IMR-90 (cell line): ENCODE measurements at regions of chr12 and their contacts with region 1.

Region 1: DNA sequence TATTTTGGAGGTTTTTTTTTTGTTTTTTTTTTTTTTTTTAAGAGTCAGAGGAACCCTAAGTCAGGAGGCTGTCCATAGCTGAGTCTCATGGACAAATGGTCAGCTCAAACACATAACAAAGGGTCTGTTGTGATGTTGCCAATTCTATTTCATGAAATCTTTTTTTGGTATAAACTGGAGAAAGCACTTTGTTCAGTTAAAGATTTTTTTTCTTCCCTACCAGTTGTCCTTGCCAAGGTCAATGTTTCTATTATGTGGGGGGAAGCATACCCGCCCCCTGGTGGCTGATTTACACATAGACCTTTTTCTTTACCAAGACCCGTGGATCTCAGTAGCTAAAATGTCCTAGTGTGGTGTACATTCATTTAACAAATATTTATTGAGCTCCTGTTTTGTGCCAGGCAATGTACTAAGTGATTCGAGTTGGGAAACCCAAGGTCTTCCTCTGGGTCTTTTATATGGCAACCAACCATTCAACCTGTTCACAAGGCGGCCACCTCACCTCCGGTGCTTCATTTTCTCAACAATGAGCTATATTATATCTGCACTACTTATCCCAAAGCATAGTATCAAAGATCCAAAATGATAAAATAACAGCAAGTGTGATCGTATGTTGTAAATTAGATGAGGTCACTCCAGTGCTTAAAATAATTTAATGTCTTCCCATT is 214.5 kb downstream of the PAH start:
- DNase-seq: peak; percentile 65
- ATAC-seq: peak; percentile 78
- H3K4me3 ChIP-seq: no peak overlapping the region
- H3K27ac ChIP-seq: no peak overlapping the region
- H3K4me1 ChIP-seq: no peaks in the 10 kb centered on the region; the same call in 1 of the 2 replicates
- H3K27me3 ChIP-seq: peaks cover 1% of the 10 kb centered on the region; the same call in 1 of the 2 replicates
- CTCF ChIP-seq: peak; percentile 73
- POLR2A ChIP-seq: no peak
- RAD21 ChIP-seq: peak; percentile 76

Region 2: GRCh38 chr12:102095675-102096263 is 606.8 kb before region 1 on chr12:
- CTCF ChIA-PET with region 1: no interaction called
- POLR2A ChIA-PET with region 1: no interaction called
- dilution Hi-C with region 1: no loop called
- in situ Hi-C with region 1: no loop called
- intact Hi-C with region 1: loop called (anchors 1 kb)
- DNase-seq: peak; percentile 61
- ATAC-seq: peak; percentile 88
- H3K4me3 ChIP-seq: no peak overlapping the region
- H3K27ac ChIP-seq: no peak overlapping the region
- H3K4me1 ChIP-seq: peaks cover 3% of the 10 kb centered on the region; the same call in 1 of the 2 replicates
- H3K27me3 ChIP-seq: no peaks in the 10 kb centered on the region
- CTCF ChIP-seq: peak; percentile 57
- POLR2A ChIP-seq: no peak
- RAD21 ChIP-seq: peak; percentile 54

Region 3: DNA sequence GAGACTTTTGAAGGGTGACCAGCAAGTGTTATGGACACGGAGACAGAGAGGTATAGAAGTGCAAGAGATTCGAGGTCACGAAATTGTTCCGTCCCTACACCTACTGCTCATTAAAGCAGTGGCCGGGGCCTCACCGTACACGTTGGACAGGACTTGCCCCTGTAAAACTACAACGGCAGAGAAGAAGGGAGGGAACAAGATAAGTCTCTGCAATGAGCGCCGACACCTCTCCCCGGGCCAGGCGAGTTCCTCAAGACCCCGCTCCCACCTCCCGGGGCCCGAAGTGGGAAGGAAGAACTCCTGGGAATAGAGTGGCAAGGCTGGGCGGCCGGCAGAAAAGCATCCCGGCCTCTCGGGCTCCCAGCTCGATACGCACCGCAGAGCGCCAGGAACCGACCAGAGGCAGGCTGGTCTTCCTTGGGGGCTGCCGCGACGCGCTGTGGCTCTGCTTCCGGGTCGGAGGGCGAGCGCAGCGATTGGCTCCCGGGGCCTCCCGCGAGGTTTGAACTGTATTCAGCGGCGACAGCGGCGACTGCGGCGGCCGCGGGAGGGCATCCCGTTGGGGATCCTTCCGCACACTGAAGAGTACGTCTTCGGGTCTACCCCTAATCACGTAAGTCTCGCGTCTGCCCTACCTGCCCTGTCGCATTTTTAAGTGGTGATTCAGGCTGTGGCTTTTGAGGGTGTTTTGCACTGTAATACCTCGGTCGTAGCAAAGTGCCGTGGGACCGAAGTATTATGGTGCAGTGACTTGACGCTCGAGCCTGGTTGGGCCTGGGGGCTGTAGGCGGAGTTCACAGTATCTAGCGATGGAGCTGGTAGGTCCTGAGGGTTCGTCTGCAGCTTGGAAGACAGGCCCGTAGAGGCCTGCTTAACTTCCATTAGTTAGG is 582.7 kb before region 1 on chr12 and contains the starts of genes NUP37 and PARPBP:
- CTCF ChIA-PET with region 1: no interaction called
- POLR2A ChIA-PET with region 1: no interaction called
- dilution Hi-C with region 1: no loop called
- in situ Hi-C with region 1: no loop called
- intact Hi-C with region 1: loop called (anchors 2 kb)
- DNase-seq: peak; percentile 81
- ATAC-seq: peak; percentile 98
- H3K4me3 ChIP-seq: peak within 1 kb of the TSS; percentile 86
- H3K27ac ChIP-seq: peak within 1 kb of the TSS; percentile 75
- H3K4me1 ChIP-seq: peaks cover 4% of the 10 kb centered on the region; the same call in 1 of the 2 replicates
- H3K27me3 ChIP-seq: no peaks in the 10 kb centered on the region
- CTCF ChIP-seq: no peak
- POLR2A ChIP-seq: peak; percentile 77
- RAD21 ChIP-seq: no peak
- total RNA-seq, gene NUP37: 55.0 and 71.9 TPM in 2 replicates
- total RNA-seq, gene PARPBP: 7.2 and 15.6 TPM in 2 replicates

Region 4: GRCh38 chr12:102169922-102170621 is 532.5 kb before region 1 on chr12:
- CTCF ChIA-PET with region 1: no interaction called
- POLR2A ChIA-PET with region 1: no interaction called
- dilution Hi-C with region 1: no loop called
- in situ Hi-C with region 1: no loop called
- intact Hi-C with region 1: loop called (anchors 5 kb)
- DNase-seq: peak; percentile 63
- ATAC-seq: peak; percentile 74
- H3K4me3 ChIP-seq: no peak overlapping the region
- H3K27ac ChIP-seq: no peak overlapping the region
- H3K4me1 ChIP-seq: peaks cover 7% of the 10 kb centered on the region
- H3K27me3 ChIP-seq: no peaks in the 10 kb centered on the region
- CTCF ChIP-seq: peak; percentile 57
- POLR2A ChIP-seq: no peak
- RAD21 ChIP-seq: peak; percentile 53

Region 5: DNA sequence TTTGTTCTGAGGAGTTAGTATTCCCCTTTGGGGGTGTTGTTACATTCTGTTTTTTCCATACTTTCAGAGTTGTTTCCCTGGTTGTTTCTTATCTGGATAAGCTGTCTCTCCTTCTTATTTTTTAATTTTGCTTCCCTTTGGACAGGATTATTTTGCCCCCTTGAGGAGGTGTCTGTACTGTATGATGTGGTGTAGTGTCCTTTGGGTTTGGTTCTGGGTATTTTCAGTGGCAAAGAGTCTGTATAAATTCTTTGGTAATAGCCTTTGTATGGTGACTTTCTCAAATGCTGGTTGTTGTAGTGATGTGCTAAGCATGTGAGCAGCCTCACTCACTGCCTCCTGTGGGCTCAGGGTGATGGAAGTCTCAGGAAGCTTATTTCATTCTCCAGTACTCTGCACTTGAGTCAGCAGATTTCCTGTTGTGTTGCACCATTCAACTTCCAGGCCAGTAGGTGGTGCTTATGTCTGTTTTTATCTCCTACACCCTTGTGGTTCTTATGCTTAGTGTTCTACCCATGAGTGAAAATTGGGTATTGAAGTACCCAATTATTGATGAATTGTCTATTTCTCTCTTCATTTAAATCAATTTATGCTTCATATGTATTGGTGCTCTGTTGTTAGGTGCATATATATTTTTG is 401.6 kb before region 1 on chr12:
- CTCF ChIA-PET with region 1: interaction called, 3 read pairs
- POLR2A ChIA-PET with region 1: no interaction called
- dilution Hi-C with region 1: no loop called
- in situ Hi-C with region 1: no loop called
- intact Hi-C with region 1: loop called (anchors 2 kb)
- DNase-seq: peak; percentile 73
- ATAC-seq: peak; percentile 80
- H3K4me3 ChIP-seq: no peak overlapping the region
- H3K27ac ChIP-seq: no peak overlapping the region
- H3K4me1 ChIP-seq: no peaks in the 10 kb centered on the region
- H3K27me3 ChIP-seq: no peaks in the 10 kb centered on the region
- CTCF ChIP-seq: peak; percentile 57
- POLR2A ChIP-seq: no peak
- RAD21 ChIP-seq: peak; percentile 65

Region 6: GRCh38 chr12:102484428-102484958 is 218.1 kb before region 1 on chr12:
- CTCF ChIA-PET with region 1: interaction called, 3 read pairs
- POLR2A ChIA-PET with region 1: no interaction called
- dilution Hi-C with region 1: no loop called
- in situ Hi-C with region 1: no loop called
- intact Hi-C with region 1: loop called (anchors 1 kb)
- DNase-seq: peak; percentile 41
- ATAC-seq: peak; percentile 51
- H3K4me3 ChIP-seq: no peak overlapping the region
- H3K27ac ChIP-seq: no peak overlapping the region
- H3K4me1 ChIP-seq: peaks cover 4% of the 10 kb centered on the region; the same call in 1 of the 2 replicates
- H3K27me3 ChIP-seq: no peaks in the 10 kb centered on the region
- CTCF ChIP-seq: peak; percentile 79
- POLR2A ChIP-seq: no peak
- RAD21 ChIP-seq: peak; percentile 64

Region 7: DNA sequence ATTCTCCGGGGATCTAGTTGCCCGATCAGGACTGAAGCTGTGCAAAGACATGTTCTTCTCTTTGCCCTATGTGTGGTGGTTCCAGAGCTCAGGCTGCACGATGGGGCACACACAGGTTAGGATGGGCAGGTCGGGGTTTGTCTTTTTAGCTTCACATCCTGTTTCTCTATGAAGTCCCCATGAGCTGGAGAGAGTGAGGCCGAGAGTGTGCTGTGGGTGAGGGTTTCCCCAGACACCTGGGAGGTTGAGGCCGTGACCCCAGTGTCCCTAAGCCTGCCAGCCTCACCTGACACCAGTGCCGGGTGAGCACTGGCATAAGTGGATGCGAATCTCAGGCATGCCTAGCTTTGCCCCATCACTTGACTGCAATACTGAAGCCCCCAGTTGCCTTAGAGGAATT is 189.3 kb before region 1 on chr12:
- CTCF ChIA-PET with region 1: no interaction called
- POLR2A ChIA-PET with region 1: no interaction called
- dilution Hi-C with region 1: no loop called
- in situ Hi-C with region 1: no loop called
- intact Hi-C with region 1: loop called (anchors 1 kb)
- DNase-seq: no peak
- ATAC-seq: no peak
- H3K4me3 ChIP-seq: no peak overlapping the region
- H3K27ac ChIP-seq: no peak overlapping the region
- H3K4me1 ChIP-seq: no peaks in the 10 kb centered on the region
- H3K27me3 ChIP-seq: no peaks in the 10 kb centered on the region
- CTCF ChIP-seq: no peak
- POLR2A ChIP-seq: no peak
- RAD21 ChIP-seq: no peak

Region 8: DNA sequence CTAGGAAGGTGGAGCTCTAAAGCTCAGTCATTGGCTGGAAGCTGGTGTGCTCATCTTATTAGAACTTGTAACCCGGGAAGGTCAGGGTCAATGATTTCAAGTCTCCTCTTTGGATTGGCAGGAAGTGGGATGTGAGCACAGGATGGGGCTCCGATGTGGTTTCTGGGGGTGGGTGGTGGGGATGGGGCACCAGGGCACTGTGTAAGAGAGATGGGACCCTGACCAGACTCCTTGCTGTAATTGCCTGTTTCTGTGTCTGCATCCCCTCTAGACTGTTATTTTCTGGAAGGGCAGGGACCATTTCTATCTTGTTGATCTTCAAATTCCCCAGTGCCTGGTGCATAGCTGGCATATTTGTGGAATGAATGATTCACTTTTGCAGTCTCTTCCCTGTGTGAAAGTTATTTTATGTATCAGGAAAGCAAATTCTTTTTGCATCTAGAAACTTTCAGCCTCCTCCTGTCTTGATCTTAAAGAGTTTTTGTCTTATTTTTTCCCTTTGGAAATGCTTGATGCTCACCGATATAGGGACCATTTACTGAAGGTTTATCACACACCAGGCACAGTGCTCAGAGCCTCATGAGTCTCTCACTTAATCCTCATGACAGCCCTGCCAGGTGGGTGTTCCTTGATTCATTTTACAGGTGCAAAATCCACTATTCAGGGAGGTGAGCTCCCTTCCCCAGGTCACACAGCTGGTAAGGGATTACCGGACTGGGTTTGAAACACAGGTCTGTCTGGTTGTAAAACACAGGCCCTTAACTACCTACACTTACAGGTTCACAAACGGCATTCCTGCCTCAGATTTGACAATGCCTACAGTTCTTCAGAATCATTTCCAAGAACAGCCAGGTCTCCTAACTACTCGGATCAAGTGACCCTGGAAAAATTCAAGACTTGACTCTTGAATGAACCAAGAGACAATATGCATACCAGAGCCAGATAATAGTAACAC is 135.3 kb before region 1 on chr12:
- CTCF ChIA-PET with region 1: no interaction called
- POLR2A ChIA-PET with region 1: no interaction called
- dilution Hi-C with region 1: no loop called
- in situ Hi-C with region 1: no loop called
- intact Hi-C with region 1: no loop called
- DNase-seq: peak; percentile 74
- ATAC-seq: peak; percentile 91
- H3K4me3 ChIP-seq: no peak overlapping the region
- H3K27ac ChIP-seq: peak overlapping the region; percentile 95
- H3K4me1 ChIP-seq: peaks cover 15% of the 10 kb centered on the region
- H3K27me3 ChIP-seq: no peaks in the 10 kb centered on the region
- CTCF ChIP-seq: no peak
- POLR2A ChIP-seq: no peak
- RAD21 ChIP-seq: no peak